ENCODE measurements at regions of chr4 and their contacts with region 1.

Region 1: GRCh38 chr4:15001869-15002658 is at the start of gene CPEB2:
- DNase-seq: peak; percentile 97
- H3K4me3 Mint-ChIP-seq: peak within 1 kb of the TSS; percentile 85
- H3K27ac Mint-ChIP-seq: peak within 1 kb of the TSS; percentile 91
- H3K4me1 Mint-ChIP-seq: peaks cover 21% of the 10 kb centered on the region
- H3K27me3 Mint-ChIP-seq: no peaks in the 10 kb centered on the region
- total RNA-seq, gene CPEB2: 12.4 and 15.0 TPM in 2 replicates

Region 2: GRCh38 chr4:13654158-13654797 is 1347.8 kb before region 1 on chr4:
- intact Hi-C with region 1: loop called (anchors 2 kb)
- DNase-seq: peak; percentile 95
- H3K4me3 Mint-ChIP-seq: peak overlapping the region; percentile 84
- H3K27ac Mint-ChIP-seq: no peak overlapping the region
- H3K4me1 Mint-ChIP-seq: peaks cover 14% of the 10 kb centered on the region
- H3K27me3 Mint-ChIP-seq: peaks cover 6% of the 10 kb centered on the region

Region 3: GRCh38 chr4:14920759-14921320 is 81.2 kb before region 1 on chr4:
- intact Hi-C with region 1: loop called (anchors 2 kb)
- DNase-seq: peak; percentile 73
- H3K4me3 Mint-ChIP-seq: no peak overlapping the region
- H3K27ac Mint-ChIP-seq: no peak overlapping the region
- H3K4me1 Mint-ChIP-seq: no peaks in the 10 kb centered on the region
- H3K27me3 Mint-ChIP-seq: peaks cover 3% of the 10 kb centered on the region

Region 4: GRCh38 chr4:15231265-15232091 is 229.4 kb after region 1 on chr4:
- intact Hi-C with region 1: loop called (anchors 5 kb)
- DNase-seq: peak; percentile 91
- H3K4me3 Mint-ChIP-seq: no peak overlapping the region
- H3K27ac Mint-ChIP-seq: no peak overlapping the region
- H3K4me1 Mint-ChIP-seq: peaks cover 24% of the 10 kb centered on the region
- H3K27me3 Mint-ChIP-seq: peaks cover 1% of the 10 kb centered on the region

Region 5: DNA sequence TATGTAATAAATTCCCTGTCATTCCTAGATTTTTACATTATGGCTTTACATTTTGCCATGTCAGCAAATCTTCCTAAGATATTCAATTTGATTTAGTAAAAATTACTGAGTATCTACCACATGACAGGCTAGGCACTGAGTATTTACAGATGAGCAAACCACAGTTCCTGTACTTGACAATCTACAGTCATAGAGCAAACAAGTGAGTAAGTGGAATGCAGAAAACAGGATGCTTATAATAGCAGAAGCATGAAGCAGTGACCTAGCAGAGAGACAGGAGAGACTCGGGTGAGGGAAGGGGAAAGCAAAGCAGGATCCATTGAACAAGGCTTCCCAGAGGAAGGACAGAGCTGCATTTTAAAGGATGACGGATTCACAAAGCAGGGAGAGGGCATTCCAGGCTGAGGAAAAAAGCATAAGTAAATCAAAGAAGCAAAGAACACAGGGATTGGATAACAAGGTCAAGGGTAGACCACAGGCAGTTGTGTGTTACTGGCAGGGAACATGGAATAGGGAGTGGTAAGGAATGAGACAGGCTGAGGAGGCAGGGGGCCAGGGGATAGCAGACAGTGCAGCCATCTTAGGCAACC is 301.1 kb after region 1 on chr4:
- intact Hi-C with region 1: no loop called
- DNase-seq: no peak
- H3K4me3 Mint-ChIP-seq: no peak overlapping the region
- H3K27ac Mint-ChIP-seq: no peak overlapping the region
- H3K4me1 Mint-ChIP-seq: no peaks in the 10 kb centered on the region
- H3K27me3 Mint-ChIP-seq: no peaks in the 10 kb centered on the region

Region 6: DNA sequence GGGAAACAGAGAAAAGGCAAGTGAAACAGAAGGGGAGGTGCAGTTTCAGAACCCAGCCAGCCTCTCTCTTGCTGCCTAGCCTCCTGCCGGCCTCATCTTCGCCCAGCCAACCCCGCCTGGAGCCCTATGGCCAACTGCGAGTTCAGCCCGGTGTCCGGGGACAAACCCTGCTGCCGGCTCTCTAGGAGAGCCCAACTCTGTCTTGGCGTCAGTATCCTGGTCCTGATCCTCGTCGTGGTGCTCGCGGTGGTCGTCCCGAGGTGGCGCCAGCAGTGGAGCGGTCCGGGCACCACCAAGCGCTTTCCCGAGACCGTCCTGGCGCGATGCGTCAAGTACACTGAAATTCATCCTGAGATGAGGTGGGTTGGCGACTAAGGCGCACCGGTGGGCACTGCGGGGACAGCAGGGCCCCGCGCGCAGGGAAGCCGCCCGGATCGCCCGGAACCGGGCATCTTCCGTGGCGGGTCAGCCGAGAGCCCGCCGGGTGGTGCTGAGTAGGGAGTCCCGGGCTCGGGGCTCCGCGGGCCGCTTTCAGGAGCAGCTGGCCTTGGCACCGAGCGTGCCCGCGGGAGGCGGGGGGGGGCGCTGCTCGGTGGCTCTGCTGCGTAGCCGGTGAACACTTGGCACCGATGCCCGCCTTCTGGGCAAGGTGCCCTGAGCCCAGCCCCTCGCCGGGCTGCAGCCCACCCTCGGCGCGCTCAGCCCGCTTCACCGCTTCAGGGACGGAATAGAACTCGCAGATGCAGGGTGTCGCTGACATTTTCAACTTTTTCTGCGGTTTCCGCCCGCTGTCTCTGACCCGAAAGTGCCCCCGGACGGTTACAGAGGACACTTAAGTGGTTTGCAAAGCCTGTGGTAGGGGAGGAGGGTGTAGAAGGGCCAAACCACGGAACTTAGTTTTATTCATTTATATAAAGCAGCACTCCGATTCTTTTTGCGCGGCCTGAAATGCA is 776.5 kb after region 1 on chr4 and contains the start of gene CD38:
- intact Hi-C with region 1: loop called (anchors 5 kb)
- DNase-seq: peak; percentile 90
- H3K4me3 Mint-ChIP-seq: peak within 1 kb of the TSS; percentile 94
- H3K27ac Mint-ChIP-seq: peak within 1 kb of the TSS; percentile 97
- H3K4me1 Mint-ChIP-seq: peaks cover 68% of the 10 kb centered on the region
- H3K27me3 Mint-ChIP-seq: no peaks in the 10 kb centered on the region
- total RNA-seq, gene CD38: 89.6 and 103 TPM in 2 replicates